ENCODE measurements at regions of chrX and their contacts with region 1.

Region 1: GRCh38 chrX:130060122-130061069 is 49.9 kb downstream of the ELF4 start:
- DNase-seq: peak; percentile 91

Region 2: GRCh38 chrX:129606918-129607317 is 453.5 kb before region 1 on chrX:
- in situ Hi-C with region 1: loop called (anchors 10 kb)
- DNase-seq: peak; percentile 74

Region 3: GRCh38 chrX:129875669-129876068 is 184.7 kb before region 1 on chrX:
- in situ Hi-C with region 1: no loop called
- DNase-seq: peak; percentile 34

Region 4: GRCh38 chrX:130173190-130173895 is 112.9 kb after region 1 on chrX:
- in situ Hi-C with region 1: no loop called
- DNase-seq: peak; percentile 74

Region 5: GRCh38 chrX:130482871-130483270 is 422.5 kb after region 1 on chrX:
- in situ Hi-C with region 1: no loop called
- DNase-seq: no peak